ENCODE measurements at regions of chr2 and their contacts with region 1.

Region 1: DNA sequence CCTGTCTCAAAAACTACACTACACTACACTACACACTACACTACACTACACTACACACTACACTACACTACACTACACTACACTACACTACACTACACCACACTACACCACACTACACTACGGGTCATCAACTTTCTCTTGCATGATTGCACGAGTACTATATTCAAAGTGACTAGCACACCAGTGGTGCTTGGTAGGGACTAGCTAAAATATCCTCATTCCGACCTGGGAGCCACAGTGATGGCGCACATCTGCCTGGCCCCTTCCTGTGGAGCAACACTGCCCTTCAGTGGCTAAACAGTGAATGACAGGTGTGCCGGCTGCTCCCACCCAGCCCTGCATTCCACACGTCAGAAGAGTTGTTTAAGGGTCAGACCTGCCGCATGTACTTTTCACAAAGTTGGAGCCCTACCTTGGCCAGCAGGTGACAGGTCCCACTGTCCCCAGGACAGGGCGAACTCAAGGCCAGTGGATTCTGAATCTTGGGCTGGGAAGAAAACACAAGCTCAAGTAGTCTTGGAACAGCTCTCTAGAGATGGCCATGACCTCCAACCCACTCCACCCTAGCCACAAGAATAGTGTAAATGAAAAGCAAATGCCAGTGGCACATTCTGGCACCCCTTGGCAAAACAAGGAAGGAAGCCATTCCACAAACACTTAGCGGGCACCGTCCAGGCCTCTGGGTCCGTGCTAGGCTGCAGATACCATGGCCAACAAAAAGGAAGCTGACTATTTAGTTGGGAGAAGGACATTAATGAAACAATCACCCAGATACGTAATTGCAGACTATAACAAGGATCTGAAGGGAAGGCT is 79.7 kb upstream of the MSH2 start:
- DNase-seq: peak; percentile 53
- H3K4me3 ChIP-seq: no peak overlapping the region
- H3K27ac ChIP-seq: no peak overlapping the region
- H3K4me1 ChIP-seq: no peaks in the 10 kb centered on the region
- H3K27me3 ChIP-seq: no peaks in the 10 kb centered on the region
- CTCF ChIP-seq: peak; percentile 99

Region 2: GRCh38 chr2:46650556-46651001 is 672.6 kb before region 1 on chr2:
- CTCF ChIA-PET with region 1: no interaction called
- dilution Hi-C with region 1: no loop called
- in situ Hi-C with region 1: loop called in 1 of 2 experiments (anchors 25 kb)
- intact Hi-C with region 1: loop called (anchors 5 kb)
- DNase-seq: peak; percentile 69
- H3K4me3 ChIP-seq: no peak overlapping the region
- H3K27ac ChIP-seq: no peak overlapping the region
- H3K4me1 ChIP-seq: peaks cover 28% of the 10 kb centered on the region
- H3K27me3 ChIP-seq: no peaks in the 10 kb centered on the region
- CTCF ChIP-seq: peak; percentile 92 to 95

Region 3: DNA sequence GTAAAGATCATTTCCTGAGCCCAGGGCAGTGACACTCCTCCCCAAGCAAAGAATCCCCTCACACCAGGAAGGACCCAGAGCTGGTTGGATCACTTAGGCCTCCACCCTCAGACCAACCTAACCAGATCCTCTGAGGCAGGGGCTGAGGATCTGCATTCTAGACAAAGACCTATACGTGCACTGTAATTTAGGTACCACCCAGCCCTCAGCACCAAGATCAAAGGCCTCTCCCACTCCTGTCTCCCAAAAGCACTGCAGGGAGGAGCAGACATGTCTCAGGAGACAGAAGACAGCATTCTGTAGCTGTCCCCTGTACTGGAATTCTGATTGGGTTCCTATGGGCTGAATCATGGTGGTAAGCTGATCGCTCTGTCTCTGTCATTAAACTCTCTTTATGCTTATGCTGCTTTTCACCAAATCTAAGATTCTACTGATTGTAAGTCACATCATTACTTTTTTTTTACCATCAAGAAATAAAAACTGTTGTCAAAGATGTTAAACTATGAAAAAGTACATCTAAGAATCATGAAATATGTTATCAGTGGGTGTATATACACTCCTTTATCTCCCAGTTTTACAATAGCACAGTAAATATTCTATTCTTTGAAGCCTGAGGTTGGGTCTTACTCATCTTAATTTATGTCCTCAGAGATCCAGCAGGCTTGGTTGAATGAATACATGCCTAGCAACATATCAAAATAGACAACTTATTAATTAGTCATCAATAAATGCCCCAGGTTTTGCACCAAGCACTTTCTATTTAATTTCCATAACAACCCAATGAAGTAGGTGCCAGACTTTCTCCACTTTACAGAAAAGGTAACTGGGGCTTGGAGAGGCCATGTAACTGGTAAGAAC is 436.0 kb before region 1 on chr2:
- CTCF ChIA-PET with region 1: no interaction called
- dilution Hi-C with region 1: no loop called
- in situ Hi-C with region 1: no loop called
- intact Hi-C with region 1: loop called (anchors 2 kb)
- DNase-seq: no peak
- H3K4me3 ChIP-seq: no peak overlapping the region
- H3K27ac ChIP-seq: no peak overlapping the region
- H3K4me1 ChIP-seq: peaks cover 4% of the 10 kb centered on the region
- H3K27me3 ChIP-seq: no peaks in the 10 kb centered on the region
- CTCF ChIP-seq: no peak

Region 4: DNA sequence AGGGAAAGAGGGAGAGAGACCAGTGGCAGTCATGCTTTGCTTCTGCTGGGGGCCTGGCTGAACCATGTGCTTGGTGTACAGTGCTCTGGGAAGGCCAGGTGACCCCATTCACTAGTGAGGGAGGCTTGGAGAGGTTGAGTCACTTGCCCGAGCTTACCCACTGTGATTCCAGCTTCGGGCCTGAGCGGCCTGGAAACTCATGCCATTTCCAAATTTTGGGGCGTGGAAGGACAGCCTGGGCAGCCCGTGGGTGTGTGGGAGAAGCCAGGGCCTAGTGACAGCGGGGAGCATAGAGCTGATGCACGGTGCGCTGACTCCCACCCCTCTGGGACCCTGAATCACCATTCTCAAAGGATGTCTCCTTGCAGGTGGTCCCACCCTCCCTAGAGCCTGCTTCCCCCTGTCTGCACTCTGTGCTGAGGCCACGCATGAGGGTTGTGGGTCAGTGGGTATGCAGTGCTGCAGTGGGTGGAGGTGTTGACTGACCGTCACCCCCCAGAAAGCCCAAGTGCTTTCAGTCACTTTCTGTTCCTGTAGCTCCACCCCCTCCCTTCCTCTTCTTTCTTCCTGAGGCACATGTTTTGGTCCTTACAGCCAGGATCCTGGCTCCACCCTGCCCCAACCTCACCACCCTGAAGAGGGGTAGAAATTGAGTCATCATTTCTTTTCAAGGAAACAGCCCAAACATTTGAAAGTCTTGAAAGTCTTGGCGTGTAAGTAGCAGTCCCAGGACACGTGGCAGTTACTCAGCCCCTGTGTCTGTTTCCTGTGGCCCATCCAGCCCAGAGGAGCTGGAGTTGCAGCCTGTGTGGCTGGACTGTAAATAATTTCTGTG is 338.4 kb before region 1 on chr2:
- CTCF ChIA-PET with region 1: interaction called, 5 read pairs
- dilution Hi-C with region 1: no loop called
- in situ Hi-C with region 1: loop called (anchors 10 kb)
- intact Hi-C with region 1: no loop called
- DNase-seq: peak; percentile 92
- H3K4me3 ChIP-seq: no peak overlapping the region
- H3K27ac ChIP-seq: peak overlapping the region; percentile 77
- H3K4me1 ChIP-seq: peaks cover 48% of the 10 kb centered on the region
- H3K27me3 ChIP-seq: no peaks in the 10 kb centered on the region
- CTCF ChIP-seq: no peak

Region 5: DNA sequence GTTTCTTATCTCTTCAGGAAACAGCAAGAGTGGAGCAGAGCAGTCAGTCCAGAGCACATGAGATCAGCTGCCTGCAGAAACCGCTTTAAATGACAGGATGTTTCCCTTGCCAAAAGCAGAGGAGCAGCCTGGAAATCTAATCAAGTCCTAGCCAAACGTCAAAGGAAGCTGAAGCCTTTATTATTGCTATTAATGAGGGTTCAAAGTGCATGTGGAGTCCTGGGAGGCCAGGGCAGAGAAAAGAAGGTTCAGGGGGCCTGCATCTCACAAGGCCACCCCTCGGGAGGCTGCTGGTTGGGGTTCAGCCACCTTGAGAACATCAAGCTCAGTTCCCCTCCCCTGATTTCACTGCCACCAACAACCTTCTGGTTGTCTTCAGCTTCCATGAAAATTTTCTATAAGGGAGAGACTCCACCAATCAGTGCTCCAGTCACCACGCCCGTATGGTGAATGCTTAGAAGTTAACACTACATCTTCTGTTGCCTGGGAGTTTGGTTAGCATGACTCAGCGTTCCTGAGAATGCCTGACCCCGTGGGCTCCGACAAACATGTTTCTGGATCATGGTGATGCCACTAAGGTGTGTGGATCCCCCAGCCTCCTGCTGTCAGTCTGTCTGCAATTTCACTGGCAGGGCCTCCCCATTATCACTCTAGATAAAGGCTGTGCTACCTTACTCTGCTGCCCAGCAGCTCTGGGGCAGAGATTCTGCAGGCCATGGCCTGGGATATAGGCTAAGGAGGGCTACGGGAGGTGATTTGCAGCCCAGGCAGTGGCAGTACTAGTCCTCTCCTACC is 234.3 kb before region 1 on chr2:
- CTCF ChIA-PET with region 1: no interaction called
- dilution Hi-C with region 1: no loop called
- in situ Hi-C with region 1: no loop called
- intact Hi-C with region 1: no loop called
- DNase-seq: peak; percentile 76
- H3K4me3 ChIP-seq: no peak overlapping the region
- H3K27ac ChIP-seq: peak overlapping the region; percentile 21
- H3K4me1 ChIP-seq: peaks cover 23% of the 10 kb centered on the region
- H3K27me3 ChIP-seq: no peaks in the 10 kb centered on the region
- CTCF ChIP-seq: no peak

Region 6: GRCh38 chr2:47127862-47128543 is 195.2 kb before region 1 on chr2:
- CTCF ChIA-PET with region 1: no interaction called
- dilution Hi-C with region 1: no loop called
- in situ Hi-C with region 1: no loop called
- intact Hi-C with region 1: loop called (anchors 1 kb)
- DNase-seq: peak; percentile 14
- H3K4me3 ChIP-seq: no peak overlapping the region
- H3K27ac ChIP-seq: no peak overlapping the region
- H3K4me1 ChIP-seq: no peaks in the 10 kb centered on the region
- H3K27me3 ChIP-seq: no peaks in the 10 kb centered on the region
- CTCF ChIP-seq: peak in 1 of 2 donors; percentile 8

Measured in mammary epithelial cell (primary cell).